ENCODE measurements at regions of chr11 and their contacts with region 1.

Region 1: GRCh38 chr11:46210133-46210636 is 67.3 kb upstream of the CREB3L1 start:
- DNase-seq: peak; percentile 72
- ATAC-seq: peak; percentile 76
- H3K4me3 ChIP-seq: no peak overlapping the region
- H3K27ac ChIP-seq: no peak overlapping the region
- H3K4me1 ChIP-seq: no peaks in the 10 kb centered on the region
- H3K27me3 ChIP-seq: peaks cover 6% of the 10 kb centered on the region
- CTCF ChIP-seq: no peak
- POLR2A ChIP-seq: no peak
- RAD21 ChIP-seq: no peak

Region 2: GRCh38 chr11:46134540-46134939 is 75.6 kb before region 1 on chr11:
- CTCF ChIA-PET with region 1: no interaction called
- POLR2A ChIA-PET with region 1: no interaction called
- dilution Hi-C with region 1: no loop called
- in situ Hi-C with region 1: no loop called
- intact Hi-C with region 1: loop called (anchors 5 kb)
- DNase-seq: no peak
- ATAC-seq: no peak
- H3K4me3 ChIP-seq: no peak overlapping the region
- H3K27ac ChIP-seq: no peak overlapping the region
- H3K4me1 ChIP-seq: no peaks in the 10 kb centered on the region
- H3K27me3 ChIP-seq: peaks cover 22% of the 10 kb centered on the region
- CTCF ChIP-seq: no peak
- POLR2A ChIP-seq: no peak
- RAD21 ChIP-seq: no peak